K562 (cell line): ENCODE measurements at regions of chr15 and their contacts with region 1.

Region 1: DNA sequence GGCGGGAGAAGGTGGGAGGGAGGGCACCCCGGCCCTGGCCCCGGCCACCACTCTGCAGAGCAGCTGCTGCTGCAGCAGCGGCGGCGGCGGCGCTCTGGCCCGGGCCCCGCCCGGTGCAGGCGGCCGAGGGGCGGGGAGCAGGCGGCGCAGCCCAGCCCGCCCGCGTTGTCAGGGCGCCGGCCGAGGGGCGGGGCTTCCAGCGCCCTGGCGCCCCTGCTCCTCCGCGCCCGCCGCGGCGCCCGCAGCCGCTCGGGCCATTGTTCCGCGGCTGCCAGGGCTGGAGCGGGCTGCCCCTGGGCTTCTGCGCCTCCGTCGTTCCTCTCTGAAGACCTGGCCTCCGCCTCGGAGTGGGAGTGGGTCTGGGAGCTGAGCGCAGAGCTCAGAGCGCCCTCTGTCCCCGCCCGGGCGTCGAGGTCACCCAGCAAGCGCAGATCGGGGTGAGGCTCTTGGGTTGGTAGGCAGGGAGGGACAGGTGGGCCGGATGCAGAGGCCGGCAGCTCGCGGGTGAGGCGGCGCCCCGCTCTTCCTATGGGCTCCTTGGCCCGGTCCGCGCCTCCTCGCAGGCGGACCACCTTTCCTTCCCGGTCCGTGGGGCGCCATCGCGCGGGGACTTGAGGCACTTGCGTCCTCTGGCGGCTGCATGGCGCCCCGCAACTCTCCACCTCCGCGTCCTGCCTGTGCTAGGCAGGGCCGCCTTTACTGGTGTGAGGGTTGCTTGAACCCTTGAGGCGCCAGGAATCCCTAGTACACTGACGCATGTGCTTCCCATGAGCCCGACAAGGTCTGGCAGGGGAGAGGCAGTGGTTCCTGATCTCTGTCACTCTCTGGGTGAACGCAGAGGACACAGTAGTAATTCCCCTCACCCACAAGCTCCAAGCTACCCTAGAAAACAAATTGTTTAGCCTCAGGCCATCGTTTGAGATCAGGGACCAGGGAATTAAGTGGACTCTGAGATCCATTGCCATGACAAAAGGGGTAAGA is at the start of gene LPCAT4:
- DNase-seq: peak; percentile 94 to 95 (median 94)
- ATAC-seq: peak; percentile 95
- H3K4me3 ChIP-seq: peak within 1 kb of the TSS; percentile 99
- H3K27ac ChIP-seq: peak within 1 kb of the TSS; percentile 91
- H3K4me1 ChIP-seq: peaks cover 7 to 22% of the 10 kb centered on the region in 2 experiments; a peak in 4 of 5 replicates
- H3K27me3 ChIP-seq: no peaks in the 10 kb centered on the region
- CTCF ChIP-seq: peak; percentile 94 to 97 (median 94)
- EP300 ChIP-seq: no peak
- POLR2A ChIP-seq: peak; percentile 86
- RAD21 ChIP-seq: peak; percentile 85 to 89
- polyA plus RNA-seq, gene LPCAT4: 7.6 to 12.3 TPM

Region 2: GRCh38 chr15:34056936-34057335 is 310.5 kb before region 1 on chr15:
- CTCF ChIA-PET with region 1: interaction called, 7 read pairs
- POLR2A ChIA-PET with region 1: no interaction called
- in situ Hi-C with region 1: loop called (anchors 10 kb)
- intact Hi-C with region 1: loop called (anchors 2 kb)
- DNase-seq: no peak
- ATAC-seq: no peak
- H3K4me3 ChIP-seq: no peak overlapping the region
- H3K27ac ChIP-seq: no peak overlapping the region
- H3K4me1 ChIP-seq: no peaks in the 10 kb centered on the region
- H3K27me3 ChIP-seq: peaks cover 2 to 4% of the 10 kb centered on the region in 2 experiments; a peak in 1 of 5 replicates
- CTCF ChIP-seq: no peak
- EP300 ChIP-seq: no peak
- POLR2A ChIP-seq: no peak
- RAD21 ChIP-seq: no peak

Region 3: GRCh38 chr15:34065941-34066340 is 301.4 kb before region 1 on chr15:
- CTCF ChIA-PET with region 1: interaction called, 7 read pairs
- POLR2A ChIA-PET with region 1: no interaction called
- in situ Hi-C with region 1: loop called (anchors 10 kb)
- intact Hi-C with region 1: loop called (anchors 2 kb)
- DNase-seq: no peak
- ATAC-seq: no peak
- H3K4me3 ChIP-seq: no peak overlapping the region
- H3K27ac ChIP-seq: no peak overlapping the region
- H3K4me1 ChIP-seq: no peaks in the 10 kb centered on the region
- H3K27me3 ChIP-seq: peaks cover 0 to 3% of the 10 kb centered on the region in 2 experiments; a peak in 2 of 5 replicates
- CTCF ChIP-seq: no peak
- EP300 ChIP-seq: no peak
- POLR2A ChIP-seq: no peak
- RAD21 ChIP-seq: no peak

Region 4: DNA sequence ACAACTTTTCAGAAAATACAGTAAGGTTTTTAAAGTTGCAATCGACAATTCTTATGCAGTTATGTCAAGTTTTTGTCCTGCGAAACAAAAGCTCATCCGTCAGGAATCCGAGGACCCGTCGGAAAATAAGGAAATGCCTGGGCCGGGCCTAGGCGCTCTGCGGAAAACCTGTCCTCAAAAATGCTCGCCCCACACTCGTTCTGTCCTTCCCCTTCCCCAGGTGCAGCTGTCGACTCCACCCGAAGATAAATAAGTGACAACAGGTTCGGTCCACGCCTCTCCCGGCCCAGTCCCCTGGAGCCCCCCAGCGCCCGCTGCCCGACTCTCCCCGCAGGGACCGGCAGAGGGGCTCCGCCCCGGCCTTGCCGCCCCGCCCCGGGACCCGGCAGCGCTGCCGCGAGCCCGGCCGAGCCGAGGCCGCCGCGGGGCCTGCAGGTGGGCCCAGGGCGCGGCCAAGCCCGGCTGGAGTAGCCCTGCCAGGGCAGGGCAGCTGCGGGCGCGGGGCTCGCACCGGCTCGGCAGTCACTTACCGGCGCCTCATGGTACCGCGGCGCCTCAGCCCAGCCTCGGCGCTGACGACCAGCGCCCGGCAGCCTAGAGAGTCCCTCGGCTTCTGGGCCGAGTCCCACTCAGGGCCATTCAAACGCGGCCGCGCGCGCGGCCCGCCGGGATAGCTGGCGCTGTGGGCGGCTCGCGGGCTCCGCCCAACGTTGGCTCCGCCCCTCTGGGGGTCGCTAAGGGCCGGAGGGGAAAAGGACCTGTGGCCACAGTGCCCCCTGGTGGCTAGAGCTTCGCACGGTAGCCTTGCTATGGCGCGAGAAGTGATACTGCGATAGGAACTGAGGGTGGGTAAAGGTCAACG is 157.7 kb before region 1 on chr15 and contains the start of gene KATNBL1:
- CTCF ChIA-PET with region 1: no interaction called
- POLR2A ChIA-PET with region 1: no interaction called
- in situ Hi-C with region 1: no loop called
- intact Hi-C with region 1: loop called (anchors 5 kb)
- DNase-seq: peak; percentile 95 to 97 (median 96)
- ATAC-seq: peak; percentile 98
- H3K4me3 ChIP-seq: peak within 1 kb of the TSS; percentile 81
- H3K27ac ChIP-seq: peak within 1 kb of the TSS; percentile 85
- H3K4me1 ChIP-seq: no peaks in the 10 kb centered on the region; a peak in 1 of 5 replicates
- H3K27me3 ChIP-seq: no peaks in the 10 kb centered on the region
- CTCF ChIP-seq: peak; percentile 90 to 97 (median 91)
- EP300 ChIP-seq: no peak
- POLR2A ChIP-seq: peak; percentile 92
- RAD21 ChIP-seq: peak; percentile 84 to 86
- polyA plus RNA-seq, gene KATNBL1: 6.6 to 10.6 TPM

Region 5: GRCh38 chr15:34241372-34242330 is 125.7 kb before region 1 on chr15:
- CTCF ChIA-PET with region 1: interaction called, 18 read pairs
- POLR2A ChIA-PET with region 1: no interaction called
- in situ Hi-C with region 1: no loop called
- intact Hi-C with region 1: loop called (anchors 2 kb)
- DNase-seq: peak; percentile 37 to 50 (median 42)
- ATAC-seq: peak; percentile 86
- H3K4me3 ChIP-seq: no peak overlapping the region
- H3K27ac ChIP-seq: no peak overlapping the region
- H3K4me1 ChIP-seq: no peaks in the 10 kb centered on the region
- H3K27me3 ChIP-seq: no peaks in the 10 kb centered on the region
- CTCF ChIP-seq: peak; percentile 46 to 76 (median 64); a peak in 5 of 6 replicates
- EP300 ChIP-seq: no peak
- POLR2A ChIP-seq: no peak
- RAD21 ChIP-seq: peak; percentile 63 to 65

Region 6: GRCh38 chr15:34342737-34343575 is 24.4 kb before region 1 on chr15 and contains the starts of genes NOP10 and NUTM1:
- CTCF ChIA-PET with region 1: interaction called, 5 read pairs
- POLR2A ChIA-PET with region 1: interaction called, 4 read pairs
- in situ Hi-C with region 1: no loop called
- intact Hi-C with region 1: loop called (anchors 1 kb)
- DNase-seq: peak; percentile 79 to 96 (median 82)
- ATAC-seq: peak; percentile 89
- H3K4me3 ChIP-seq: peak within 1 kb of the TSS; percentile 77
- H3K27ac ChIP-seq: peak within 1 kb of the TSS; percentile 97
- H3K4me1 ChIP-seq: peaks cover 9% of the 10 kb centered on the region in 2 experiments; a peak in 4 of 5 replicates
- H3K27me3 ChIP-seq: peaks cover 0 to 1% of the 10 kb centered on the region in 2 experiments; a peak in 2 of 5 replicates
- CTCF ChIP-seq: peak; percentile 90 to 99 (median 97)
- EP300 ChIP-seq: peak; percentile 30; the same call in 1 of the 2 replicates
- POLR2A ChIP-seq: peak; percentile 98
- RAD21 ChIP-seq: peak; percentile 71 to 82
- polyA plus RNA-seq, gene NOP10: 1,599 to 1,663 TPM
- polyA plus RNA-seq, gene NUTM1: 0.01 TPM in 1 of 2 experiments, not detected in the other

Region 7: GRCh38 chr15:34355241-34355640 is 12.2 kb before region 1 on chr15:
- CTCF ChIA-PET with region 1: no interaction called
- POLR2A ChIA-PET with region 1: interaction called, 10 read pairs
- in situ Hi-C with region 1: no loop called
- intact Hi-C with region 1: no loop called
- DNase-seq: no peak
- ATAC-seq: no peak
- H3K4me3 ChIP-seq: no peak overlapping the region
- H3K27ac ChIP-seq: no peak overlapping the region
- H3K4me1 ChIP-seq: peaks cover 0 to 2% of the 10 kb centered on the region in 2 experiments; a peak in 1 of 5 replicates
- H3K27me3 ChIP-seq: peaks cover 8 to 11% of the 10 kb centered on the region in 2 experiments
- CTCF ChIP-seq: no peak
- EP300 ChIP-seq: no peak
- POLR2A ChIP-seq: no peak
- RAD21 ChIP-seq: no peak